ENCODE measurements at regions of chr7 and their contacts with region 1.

Region 1: GRCh38 chr7:150435390-150436073 is 14.9 kb upstream of the GIMAP8 start:
- DNase-seq: no peak
- H3K4me3 ChIP-seq: no peak overlapping the region
- H3K27ac ChIP-seq: no peak overlapping the region
- H3K4me1 ChIP-seq: no peaks in the 10 kb centered on the region; a peak in 1 of 4 replicates
- H3K27me3 ChIP-seq: peaks cover 14% of the 10 kb centered on the region
- CTCF ChIP-seq: no peak
- EP300 ChIP-seq: no peak
- RAD21 ChIP-seq: no peak

Region 2: GRCh38 chr7:150411606-150412415 is 23.7 kb before region 1 on chr7:
- CTCF ChIA-PET with region 1: no interaction called
- POLR2A ChIA-PET with region 1: no interaction called
- DNase-seq: peak; percentile 21
- H3K4me3 ChIP-seq: no peak overlapping the region
- H3K27ac ChIP-seq: no peak overlapping the region
- H3K4me1 ChIP-seq: no peaks in the 10 kb centered on the region
- H3K27me3 ChIP-seq: no peaks in the 10 kb centered on the region
- CTCF ChIP-seq: no peak
- EP300 ChIP-seq: no peak
- RAD21 ChIP-seq: no peak

Region 3: DNA sequence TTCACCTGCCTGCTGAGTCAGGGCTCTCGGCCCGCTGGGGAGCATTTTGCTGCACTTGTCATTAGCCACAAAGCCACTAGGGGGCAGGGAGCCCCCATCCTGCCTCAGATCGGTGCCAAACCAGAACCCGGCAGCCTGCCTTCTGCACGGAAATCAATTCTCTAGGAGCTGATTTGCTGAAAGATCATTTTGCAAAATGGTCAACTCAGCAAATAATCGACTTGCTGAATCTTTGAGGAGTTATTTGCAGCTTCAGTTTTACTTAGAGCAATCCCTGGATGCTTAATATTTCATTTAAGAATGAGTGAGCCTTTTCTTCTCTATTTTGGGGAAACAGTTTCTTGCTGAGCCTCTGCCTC is 13.2 kb after region 1 on chr7:
- CTCF ChIA-PET with region 1: interaction called, 13 read pairs
- POLR2A ChIA-PET with region 1: no interaction called
- DNase-seq: peak; percentile 96
- H3K4me3 ChIP-seq: no peak overlapping the region; a peak in 1 of 4 replicates
- H3K27ac ChIP-seq: no peak overlapping the region
- H3K4me1 ChIP-seq: no peaks in the 10 kb centered on the region
- H3K27me3 ChIP-seq: peaks cover 31% of the 10 kb centered on the region; the same call in 1 of the 2 replicates
- CTCF ChIP-seq: peak; percentile 96
- EP300 ChIP-seq: no peak
- RAD21 ChIP-seq: peak; percentile 96